CD8-positive, alpha-beta T cell (primary cell): ENCODE measurements at regions of chr11 and their contacts with region 1.

Region 1: DNA sequence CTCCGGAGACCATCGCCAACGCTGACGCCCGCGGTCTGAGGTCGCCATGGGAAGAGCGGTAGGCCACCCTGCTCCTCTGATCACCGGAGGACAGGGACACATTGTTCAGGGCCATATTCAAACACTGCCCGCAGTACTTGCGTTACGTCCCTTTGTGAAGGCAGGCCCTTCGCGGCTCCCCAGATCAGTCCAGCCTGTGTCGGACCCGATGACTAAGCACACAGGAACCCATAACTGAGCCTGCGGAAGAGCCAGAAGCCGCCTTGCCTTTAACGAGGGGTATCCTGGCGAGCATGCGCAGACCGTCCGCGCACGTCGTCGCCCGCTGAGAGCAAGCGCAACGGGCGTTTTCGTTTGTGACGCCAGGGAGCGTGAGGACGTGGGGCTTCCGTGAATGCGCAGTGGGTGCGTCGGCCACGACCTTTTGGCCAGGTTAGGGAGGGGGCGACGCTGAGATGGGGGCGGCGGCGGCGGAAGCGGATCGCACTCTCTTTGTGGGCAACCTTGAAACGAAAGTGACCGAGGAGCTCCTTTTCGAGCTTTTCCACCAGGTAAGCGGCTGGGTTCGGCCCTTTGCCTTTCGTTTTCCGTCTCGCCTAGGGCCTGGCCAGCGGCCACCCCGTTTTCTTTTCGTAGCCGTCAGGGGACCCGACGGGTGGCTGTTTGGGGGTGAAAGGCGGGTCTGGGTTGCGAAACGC is at the starts of genes C11orf71 and RBM7:
- DNase-seq: peak; percentile 95 to 100 (median 98)
- ATAC-seq: peak; percentile 95
- H3K4me3 ChIP-seq: peak within 1 kb of the TSS; percentile 93 to 94
- H3K4me3 Mint-ChIP-seq: peak within 1 kb of the TSS; percentile 94
- H3K27ac ChIP-seq: peak within 1 kb of the TSS; percentile 97 to 98
- H3K27ac Mint-ChIP-seq: peak within 1 kb of the TSS; percentile 97
- H3K4me1 ChIP-seq: peaks cover 48% of the 10 kb centered on the region
- H3K4me1 Mint-ChIP-seq: peaks cover 57% of the 10 kb centered on the region
- H3K27me3 ChIP-seq: no peaks in the 10 kb centered on the region
- H3K27me3 Mint-ChIP-seq: no peaks in the 10 kb centered on the region
- CTCF ChIP-seq: no peak
- total RNA-seq, gene C11orf71: 6.3 to 8.8 TPM
- total RNA-seq, gene RBM7: 72.7 to 75.3 TPM

Region 2: DNA sequence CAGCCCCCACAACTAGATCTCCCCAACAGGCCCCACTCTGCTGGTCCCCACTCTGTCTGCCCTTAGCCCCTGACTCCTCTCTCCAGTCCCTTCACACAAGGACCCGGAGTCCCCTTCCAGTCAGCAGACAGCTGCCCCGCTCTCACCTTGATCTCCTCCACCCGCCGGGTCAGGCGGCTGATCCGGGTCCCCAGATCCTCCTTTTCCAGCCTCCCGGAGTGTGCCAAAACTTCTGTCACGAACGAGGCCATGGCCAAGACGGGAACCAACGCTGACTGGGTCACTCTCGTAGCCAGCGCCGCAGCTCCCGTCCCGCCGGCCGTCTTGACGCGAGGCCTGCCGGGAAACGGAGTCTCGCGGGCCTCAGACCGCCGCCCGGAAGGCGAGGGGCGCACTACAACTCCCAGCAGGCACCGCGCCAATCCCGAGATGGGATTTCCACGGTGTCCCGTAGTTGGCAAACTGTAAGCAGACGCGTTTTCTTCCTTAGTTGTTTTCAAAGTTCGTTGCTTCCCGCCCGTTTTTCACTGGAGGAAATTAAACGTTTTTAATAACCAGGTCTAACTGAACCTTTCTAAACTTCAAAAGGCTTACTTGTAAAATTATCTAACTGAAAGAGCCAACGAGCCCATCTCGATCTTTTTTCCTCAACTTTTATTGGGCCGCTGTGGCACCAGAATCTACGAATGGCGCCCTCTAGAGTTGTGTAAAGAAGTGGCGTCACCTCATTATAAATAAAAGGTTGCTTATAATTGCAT is 626.8 kb before region 1 on chr11 and contains the start of gene ZW10:
- CTCF ChIA-PET with region 1: no interaction called
- POLR2A ChIA-PET with region 1: no interaction called
- intact Hi-C with region 1: loop called (anchors 1 to 5 kb)
- DNase-seq: peak; percentile 79 to 96 (median 91)
- ATAC-seq: peak; percentile 98
- H3K4me3 ChIP-seq: peak within 1 kb of the TSS; percentile 89 to 90
- H3K4me3 Mint-ChIP-seq: peak within 1 kb of the TSS; percentile 99
- H3K27ac ChIP-seq: peak within 1 kb of the TSS; percentile 59 to 73
- H3K27ac Mint-ChIP-seq: peak within 1 kb of the TSS; percentile 89
- H3K4me1 ChIP-seq: peaks cover 3% of the 10 kb centered on the region
- H3K4me1 Mint-ChIP-seq: peaks cover 28% of the 10 kb centered on the region
- H3K27me3 ChIP-seq: no peaks in the 10 kb centered on the region
- H3K27me3 Mint-ChIP-seq: no peaks in the 10 kb centered on the region
- CTCF ChIP-seq: peak; percentile 96
- total RNA-seq, gene ZW10: 2.6 to 2.8 TPM

Region 3: GRCh38 chr11:113875234-113876073 is 524.9 kb before region 1 on chr11 and contains the start of gene USP28:
- CTCF ChIA-PET with region 1: no interaction called
- POLR2A ChIA-PET with region 1: no interaction called
- intact Hi-C with region 1: loop called (anchors 1 to 5 kb)
- DNase-seq: peak; percentile 45 to 90 (median 76)
- ATAC-seq: peak; percentile 85
- H3K4me3 ChIP-seq: peak within 1 kb of the TSS; percentile 80 to 95
- H3K4me3 Mint-ChIP-seq: peak within 1 kb of the TSS; percentile 96
- H3K27ac ChIP-seq: peak within 1 kb of the TSS; percentile 52 to 88
- H3K27ac Mint-ChIP-seq: peak within 1 kb of the TSS; percentile 97
- H3K4me1 ChIP-seq: peaks cover 11% of the 10 kb centered on the region
- H3K4me1 Mint-ChIP-seq: peaks cover 48% of the 10 kb centered on the region
- H3K27me3 ChIP-seq: no peaks in the 10 kb centered on the region
- H3K27me3 Mint-ChIP-seq: no peaks in the 10 kb centered on the region
- CTCF ChIP-seq: no peak
- total RNA-seq, gene USP28: 6.4 to 6.8 TPM

Region 4: GRCh38 chr11:114036156-114036811 is 364.1 kb before region 1 on chr11:
- CTCF ChIA-PET with region 1: no interaction called
- POLR2A ChIA-PET with region 1: no interaction called
- intact Hi-C with region 1: loop called in 1 of 2 experiments (anchors 10 kb)
- DNase-seq: peak; percentile 7 to 80 (median 56)
- ATAC-seq: peak; percentile 54
- H3K4me3 ChIP-seq: no peak overlapping the region
- H3K4me3 Mint-ChIP-seq: no peak overlapping the region
- H3K27ac ChIP-seq: no peak overlapping the region
- H3K27ac Mint-ChIP-seq: no peak overlapping the region
- H3K4me1 ChIP-seq: peaks cover 9% of the 10 kb centered on the region
- H3K4me1 Mint-ChIP-seq: peaks cover 3% of the 10 kb centered on the region
- H3K27me3 ChIP-seq: peaks cover 0 to 3% of the 10 kb centered on the region in 2 experiments
- H3K27me3 Mint-ChIP-seq: peaks cover 7% of the 10 kb centered on the region
- CTCF ChIP-seq: peak; percentile 59

Region 5: DNA sequence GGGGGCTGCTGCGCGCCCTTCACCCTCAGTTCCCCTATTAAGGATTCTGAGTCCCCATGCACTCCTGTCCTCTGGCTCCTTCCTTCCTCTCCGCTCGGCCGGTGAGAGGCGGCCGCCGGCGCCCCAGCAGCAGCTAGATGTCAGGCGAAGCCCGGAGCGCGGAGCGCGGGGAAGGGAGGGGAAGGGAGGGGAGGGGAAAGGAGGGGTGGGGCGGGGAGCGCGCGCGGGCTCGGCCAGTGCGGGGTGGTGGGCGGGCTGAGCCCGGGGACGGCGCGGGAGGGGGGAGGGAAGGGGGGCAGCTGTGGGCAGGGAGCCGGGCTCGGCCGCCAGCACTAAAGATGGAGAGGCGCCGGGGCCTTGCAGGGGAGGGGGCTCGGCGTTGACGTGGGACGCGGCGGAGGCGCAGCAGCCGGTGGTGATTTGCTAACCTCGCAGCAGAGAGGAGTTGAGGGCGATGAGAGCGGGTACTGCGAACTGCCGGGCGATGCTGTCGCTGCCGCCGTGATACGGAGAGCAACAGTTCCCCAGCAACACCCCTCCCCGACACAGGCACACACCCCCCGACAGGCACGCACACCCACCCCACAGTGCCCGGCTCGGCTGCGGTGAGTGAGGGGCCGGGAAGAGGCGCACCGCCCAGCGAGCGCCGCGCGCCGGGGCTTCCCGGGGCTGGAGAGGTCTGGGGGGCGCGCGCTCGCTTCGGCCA is 340.9 kb before region 1 on chr11 and contains the start of gene ZBTB16:
- CTCF ChIA-PET with region 1: no interaction called
- POLR2A ChIA-PET with region 1: no interaction called
- intact Hi-C with region 1: loop called in 1 of 2 experiments (anchors 10 kb)
- DNase-seq: peak in 8 of 9 experiments; percentile 50 to 79 (median 64)
- ATAC-seq: peak; percentile 67
- H3K4me3 ChIP-seq: peak within 1 kb of the TSS; percentile 56 to 70
- H3K4me3 Mint-ChIP-seq: peak within 1 kb of the TSS; percentile 89
- H3K27ac ChIP-seq: peak within 1 kb of the TSS in 1 of 2 experiments; percentile 31
- H3K27ac Mint-ChIP-seq: peak within 1 kb of the TSS; percentile 79
- H3K4me1 ChIP-seq: peaks cover 21% of the 10 kb centered on the region
- H3K4me1 Mint-ChIP-seq: peaks cover 9% of the 10 kb centered on the region
- H3K27me3 ChIP-seq: peaks cover 3 to 14% of the 10 kb centered on the region in 2 experiments
- H3K27me3 Mint-ChIP-seq: peaks cover 21% of the 10 kb centered on the region
- CTCF ChIP-seq: no peak
- total RNA-seq, gene ZBTB16: 15.3 to 18.3 TPM

Region 6: GRCh38 chr11:114340311-114341131 is 59.8 kb before region 1 on chr11:
- CTCF ChIA-PET with region 1: no interaction called
- POLR2A ChIA-PET with region 1: no interaction called
- intact Hi-C with region 1: loop called in 1 of 2 experiments (anchors 2 kb)
- DNase-seq: peak in 6 of 9 experiments; percentile 6 to 66 (median 42)
- ATAC-seq: peak; percentile 58
- H3K4me3 ChIP-seq: peak overlapping the region in 1 of 2 experiments; percentile 38
- H3K4me3 Mint-ChIP-seq: peak overlapping the region; percentile 68
- H3K27ac ChIP-seq: no peak overlapping the region
- H3K27ac Mint-ChIP-seq: no peak overlapping the region
- H3K4me1 ChIP-seq: peaks cover 5% of the 10 kb centered on the region
- H3K4me1 Mint-ChIP-seq: peaks cover 13% of the 10 kb centered on the region
- H3K27me3 ChIP-seq: no peaks in the 10 kb centered on the region
- H3K27me3 Mint-ChIP-seq: no peaks in the 10 kb centered on the region
- CTCF ChIP-seq: peak; percentile 71

Region 7: DNA sequence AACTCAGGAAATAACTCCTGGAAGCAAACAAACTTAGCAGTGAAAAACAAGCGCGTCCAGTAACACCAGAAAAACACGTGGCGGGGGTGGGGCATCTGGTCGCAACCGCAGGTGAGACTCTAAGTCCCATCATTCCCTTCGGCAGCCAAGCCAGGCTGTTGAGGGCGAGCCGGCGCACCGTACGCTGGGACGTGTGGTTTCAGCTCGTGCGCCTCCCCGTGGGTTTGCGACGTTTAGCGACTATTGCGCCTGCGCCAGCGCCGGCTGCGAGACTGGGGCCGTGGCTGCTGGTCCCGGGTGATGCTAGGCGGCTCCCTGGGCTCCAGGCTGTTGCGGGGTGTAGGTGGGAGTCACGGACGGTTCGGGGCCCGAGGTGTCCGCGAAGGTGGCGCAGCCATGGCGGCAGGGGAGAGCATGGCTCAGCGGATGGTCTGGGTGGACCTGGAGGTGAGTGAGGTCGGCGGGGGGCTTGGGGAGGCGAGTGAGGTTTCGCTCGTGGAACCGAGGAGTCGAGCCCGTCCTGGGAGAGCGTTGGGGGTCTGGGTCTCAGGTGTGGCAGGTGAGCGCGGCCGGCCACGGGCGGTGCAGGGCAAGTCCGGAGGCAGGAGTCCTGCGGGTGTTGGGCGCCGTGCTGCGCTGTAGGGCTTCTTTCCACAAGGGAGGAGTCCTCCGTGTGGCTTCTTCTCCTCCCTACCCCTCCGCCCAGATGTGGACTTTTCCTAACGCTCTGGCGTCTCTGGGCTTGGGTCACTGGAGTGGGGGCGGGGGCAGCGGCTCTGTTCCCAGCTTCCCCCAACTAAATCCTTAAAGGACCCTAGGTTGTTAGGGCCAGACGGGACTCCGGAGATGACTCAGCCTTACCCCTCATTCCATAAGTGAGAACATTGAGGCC is 39.1 kb after region 1 on chr11 and contains the start of gene REXO2:
- CTCF ChIA-PET with region 1: no interaction called
- POLR2A ChIA-PET with region 1: interaction called, 3 read pairs
- intact Hi-C with region 1: loop called (anchors 1 kb)
- DNase-seq: peak; percentile 86 to 98 (median 94)
- ATAC-seq: peak; percentile 99
- H3K4me3 ChIP-seq: peak within 1 kb of the TSS; percentile 86 to 99
- H3K4me3 Mint-ChIP-seq: peak within 1 kb of the TSS; percentile 98
- H3K27ac ChIP-seq: peak within 1 kb of the TSS; percentile 58 to 66
- H3K27ac Mint-ChIP-seq: peak within 1 kb of the TSS; percentile 91
- H3K4me1 ChIP-seq: peaks cover 16% of the 10 kb centered on the region
- H3K4me1 Mint-ChIP-seq: peaks cover 30% of the 10 kb centered on the region
- H3K27me3 ChIP-seq: no peaks in the 10 kb centered on the region
- H3K27me3 Mint-ChIP-seq: no peaks in the 10 kb centered on the region
- CTCF ChIP-seq: no peak
- total RNA-seq, gene REXO2: 18.8 to 19.9 TPM